Breast epithelium (tissue), 4 donors: ENCODE measurements at regions of chr14 and their contacts with region 1.

Region 1: DNA sequence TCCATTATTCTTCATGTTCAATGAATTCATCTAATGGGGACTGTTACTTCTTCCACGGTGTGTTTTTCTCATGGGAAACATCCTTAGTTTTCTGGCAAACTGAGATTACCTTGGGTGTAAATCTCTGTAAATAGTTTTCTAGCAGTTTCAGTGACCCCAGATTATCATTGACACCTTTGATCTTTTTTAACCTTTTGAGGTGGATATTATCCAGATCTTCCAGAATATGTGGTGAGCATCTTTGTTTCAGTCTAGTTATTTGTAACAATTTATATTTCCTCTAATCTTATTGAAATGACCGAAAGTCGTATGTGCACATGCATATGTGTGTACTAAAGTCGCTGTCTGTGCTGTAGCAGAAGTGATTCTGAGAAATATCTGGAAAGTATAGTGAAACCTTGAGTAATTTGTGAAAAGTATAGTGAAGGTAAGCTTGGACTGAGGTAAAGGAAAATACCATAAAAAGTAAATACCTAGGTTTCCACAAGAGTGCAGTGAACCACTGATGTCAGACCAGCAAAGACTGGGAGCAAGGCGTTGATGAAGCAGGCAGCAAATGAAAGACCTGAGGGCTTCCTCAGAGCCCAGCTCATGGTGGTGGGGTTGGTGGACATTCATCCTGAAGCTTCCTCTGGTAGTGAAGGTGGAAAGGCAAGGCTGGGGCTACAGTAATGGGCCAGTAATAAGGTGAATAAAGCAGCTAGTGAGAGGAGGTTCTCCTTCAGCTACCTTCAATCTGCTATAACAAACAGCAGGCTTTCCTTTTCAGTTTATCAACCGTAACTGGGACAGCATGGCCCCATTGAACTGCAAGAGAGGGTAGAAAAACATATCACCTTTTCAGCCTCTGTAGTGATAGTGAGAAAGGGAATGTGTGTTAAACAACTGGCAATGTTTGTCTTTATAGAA is 480.2 kb upstream of the FBXO33 start:
- DNase-seq: no peak
- H3K4me3 ChIP-seq: no peak overlapping the region
- H3K27ac ChIP-seq: no peak overlapping the region
- H3K4me1 ChIP-seq: no peaks in the 10 kb centered on the region
- H3K27me3 ChIP-seq: no peaks in the 10 kb centered on the region
- CTCF ChIP-seq: no peak
- POLR2A ChIP-seq: no peak

Region 2: DNA sequence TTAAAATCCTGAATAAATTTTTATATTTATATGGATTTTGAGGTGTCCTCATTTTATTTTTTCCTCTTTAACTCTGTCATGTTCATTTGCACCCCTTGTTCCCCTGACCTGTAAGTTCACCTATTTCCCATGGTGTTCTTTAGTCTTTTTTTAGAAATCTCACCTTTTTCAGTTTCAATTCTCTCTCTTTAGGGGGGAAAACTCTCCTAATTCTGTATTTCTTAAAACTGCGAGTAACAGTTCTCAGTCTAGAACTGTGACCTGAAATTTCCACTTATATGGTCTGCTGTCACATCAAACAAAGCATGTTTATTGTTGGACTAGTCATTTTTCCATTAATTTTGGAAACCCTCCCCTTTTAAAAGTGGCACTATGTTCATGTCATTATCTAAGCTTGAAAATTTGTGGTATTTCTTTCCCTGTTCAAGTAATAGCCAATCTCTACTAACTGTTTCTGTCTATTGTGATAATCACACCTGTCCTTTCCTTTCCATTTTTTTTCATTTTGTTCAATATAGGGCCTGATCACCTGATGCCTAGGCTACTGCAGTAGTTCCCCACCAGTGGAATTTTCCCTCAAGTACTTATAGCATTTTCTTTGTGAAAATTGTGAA is 466.2 kb before region 1 on chr14:
- intact Hi-C with region 1: no loop called
- DNase-seq: no peak
- H3K4me3 ChIP-seq: no peak overlapping the region
- H3K27ac ChIP-seq: no peak overlapping the region
- H3K4me1 ChIP-seq: no peaks in the 10 kb centered on the region
- H3K27me3 ChIP-seq: no peaks in the 10 kb centered on the region
- CTCF ChIP-seq: no peak
- POLR2A ChIP-seq: no peak

Region 3: GRCh38 chr14:40164083-40164482 is 251.6 kb after region 1 on chr14:
- intact Hi-C with region 1: loop called (anchors 5 kb)
- DNase-seq: no peak
- H3K4me3 ChIP-seq: no peak overlapping the region
- H3K27ac ChIP-seq: no peak overlapping the region
- H3K4me1 ChIP-seq: no peaks in the 10 kb centered on the region
- H3K27me3 ChIP-seq: no peaks in the 10 kb centered on the region
- CTCF ChIP-seq: no peak
- POLR2A ChIP-seq: no peak